Endothelial cell of umbilical vein (primary cell): ENCODE measurements at regions of chr12 and their contacts with region 1.

Region 1: GRCh38 chr12:116236148-116236731 is 41.3 kb downstream of the MED13L start:
- DNase-seq: peak; percentile 87
- H3K4me3 ChIP-seq: no peak overlapping the region
- H3K27ac ChIP-seq: peak overlapping the region; percentile 17
- H3K4me1 ChIP-seq: peaks cover 14% of the 10 kb centered on the region
- H3K27me3 ChIP-seq: no peaks in the 10 kb centered on the region
- CTCF ChIP-seq: peak; percentile 59
- POLR2A ChIP-seq: no peak

Region 2: GRCh38 chr12:115998119-115998633 is 238.1 kb before region 1 on chr12:
- CTCF ChIA-PET with region 1: interaction called, 14 read pairs
- POLR2A ChIA-PET with region 1: no interaction called
- dilution Hi-C with region 1: no loop called
- intact Hi-C with region 1: loop called (anchors 1 kb)
- DNase-seq: peak; percentile 70
- H3K4me3 ChIP-seq: no peak overlapping the region
- H3K27ac ChIP-seq: peak overlapping the region; percentile 34
- H3K4me1 ChIP-seq: no peaks in the 10 kb centered on the region
- H3K27me3 ChIP-seq: no peaks in the 10 kb centered on the region
- CTCF ChIP-seq: peak; percentile 47 to 52
- POLR2A ChIP-seq: no peak

Region 3: DNA sequence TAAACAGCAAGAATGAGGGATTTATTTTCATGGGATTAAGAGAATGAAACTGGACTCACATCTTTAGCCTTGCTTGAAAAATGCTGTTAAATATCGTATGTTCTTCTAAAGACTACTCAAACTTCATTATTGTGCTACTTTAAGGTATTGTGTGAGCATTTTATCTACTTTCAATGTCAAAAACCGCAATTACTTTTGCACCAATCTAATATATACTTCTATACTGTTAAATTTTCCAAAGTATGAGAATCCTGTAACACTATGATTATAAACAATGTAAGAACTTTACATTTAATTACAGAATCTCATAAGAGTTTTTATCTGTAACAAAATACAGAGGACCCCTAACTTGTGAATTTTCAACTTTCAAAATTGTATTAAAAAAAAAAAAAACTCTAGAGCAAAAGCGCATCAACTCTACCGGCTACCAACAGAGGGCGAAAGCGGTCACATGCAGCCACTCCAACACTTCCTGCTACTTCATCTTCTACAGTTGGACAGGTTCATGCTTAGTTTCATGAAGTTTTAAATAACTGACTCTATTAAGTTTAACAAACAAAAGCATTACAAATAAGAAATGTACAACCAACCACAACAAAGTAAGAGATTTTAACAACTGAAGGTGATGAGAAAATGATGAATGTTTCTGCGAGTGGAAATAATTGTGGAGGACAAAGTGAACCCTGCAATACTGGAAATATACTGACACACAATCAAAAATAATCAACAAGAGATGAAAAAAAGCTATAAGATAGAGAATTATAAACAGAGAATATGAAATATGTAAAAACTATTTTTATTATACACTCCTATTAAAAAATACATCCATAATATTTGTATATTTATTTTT is 169.6 kb before region 1 on chr12:
- CTCF ChIA-PET with region 1: interaction called, 14 read pairs
- POLR2A ChIA-PET with region 1: no interaction called
- dilution Hi-C with region 1: no loop called
- intact Hi-C with region 1: loop called (anchors 1 kb)
- DNase-seq: peak; percentile 46
- H3K4me3 ChIP-seq: no peak overlapping the region
- H3K27ac ChIP-seq: no peak overlapping the region
- H3K4me1 ChIP-seq: peaks cover 3% of the 10 kb centered on the region
- H3K27me3 ChIP-seq: no peaks in the 10 kb centered on the region
- CTCF ChIP-seq: peak; percentile 61 to 80
- POLR2A ChIP-seq: no peak

Region 4: GRCh38 chr12:116172224-116172849 is 63.9 kb before region 1 on chr12:
- CTCF ChIA-PET with region 1: interaction called, 10 read pairs
- POLR2A ChIA-PET with region 1: no interaction called
- dilution Hi-C with region 1: no loop called
- intact Hi-C with region 1: no loop called
- DNase-seq: peak; percentile 69
- H3K4me3 ChIP-seq: peak overlapping the region in 1 of 3 experiments; percentile 47
- H3K27ac ChIP-seq: peak overlapping the region; percentile 67
- H3K4me1 ChIP-seq: peaks cover 18% of the 10 kb centered on the region
- H3K27me3 ChIP-seq: no peaks in the 10 kb centered on the region
- CTCF ChIP-seq: no peak
- POLR2A ChIP-seq: no peak

Region 5: DNA sequence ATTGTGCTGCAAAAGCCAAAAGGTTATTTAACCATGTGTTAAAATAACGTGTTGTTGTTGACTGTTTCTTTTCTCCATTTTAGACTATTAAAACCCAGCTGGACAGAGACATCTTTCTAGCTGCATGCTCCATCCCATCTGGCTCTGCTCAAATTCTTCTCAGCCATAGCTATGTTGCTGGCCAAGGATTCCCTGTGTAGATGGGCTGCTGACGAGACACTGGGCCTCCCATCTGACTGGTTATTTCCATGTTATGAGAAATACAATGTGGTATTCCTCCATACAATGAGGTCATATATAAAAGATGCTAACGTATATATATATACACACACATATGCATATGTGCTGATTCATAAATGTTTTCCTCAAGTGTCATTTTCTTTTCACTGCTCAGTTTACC is 11.1 kb after region 1 on chr12:
- CTCF ChIA-PET with region 1: interaction called, 13 read pairs
- POLR2A ChIA-PET with region 1: no interaction called
- dilution Hi-C with region 1: no loop called
- intact Hi-C with region 1: no loop called
- DNase-seq: no peak
- H3K4me3 ChIP-seq: no peak overlapping the region
- H3K27ac ChIP-seq: no peak overlapping the region
- H3K4me1 ChIP-seq: peaks cover 16% of the 10 kb centered on the region
- H3K27me3 ChIP-seq: no peaks in the 10 kb centered on the region
- CTCF ChIP-seq: no peak
- POLR2A ChIP-seq: no peak

Region 6: GRCh38 chr12:116455540-116456329 is 219.5 kb after region 1 on chr12:
- CTCF ChIA-PET with region 1: interaction called, 5 read pairs
- POLR2A ChIA-PET with region 1: no interaction called
- dilution Hi-C with region 1: no loop called
- intact Hi-C with region 1: loop called (anchors 2 kb)
- DNase-seq: peak; percentile 98
- H3K4me3 ChIP-seq: peak overlapping the region in 2 of 3 experiments; percentile 14 to 15
- H3K27ac ChIP-seq: peak overlapping the region; percentile 96
- H3K4me1 ChIP-seq: peaks cover 17% of the 10 kb centered on the region
- H3K27me3 ChIP-seq: no peaks in the 10 kb centered on the region
- CTCF ChIP-seq: no peak
- POLR2A ChIP-seq: no peak